ENCODE measurements at regions of chr9 and their contacts with region 1.

Region 1: GRCh38 chr9:125133403-125134329 is 9.7 kb downstream of the SCAI start:
- DNase-seq: no peak
- H3K4me3 Mint-ChIP-seq: peak overlapping the region; percentile 20
- H3K27ac Mint-ChIP-seq: peak overlapping the region; percentile 88
- H3K4me1 Mint-ChIP-seq: peaks cover 16% of the 10 kb centered on the region
- H3K27me3 Mint-ChIP-seq: no peaks in the 10 kb centered on the region

Region 2: GRCh38 chr9:125003332-125003731 is 130.3 kb before region 1 on chr9:
- intact Hi-C with region 1: no loop called
- DNase-seq: no peak
- H3K4me3 Mint-ChIP-seq: no peak overlapping the region
- H3K27ac Mint-ChIP-seq: no peak overlapping the region
- H3K4me1 Mint-ChIP-seq: no peaks in the 10 kb centered on the region
- H3K27me3 Mint-ChIP-seq: no peaks in the 10 kb centered on the region

Region 3: DNA sequence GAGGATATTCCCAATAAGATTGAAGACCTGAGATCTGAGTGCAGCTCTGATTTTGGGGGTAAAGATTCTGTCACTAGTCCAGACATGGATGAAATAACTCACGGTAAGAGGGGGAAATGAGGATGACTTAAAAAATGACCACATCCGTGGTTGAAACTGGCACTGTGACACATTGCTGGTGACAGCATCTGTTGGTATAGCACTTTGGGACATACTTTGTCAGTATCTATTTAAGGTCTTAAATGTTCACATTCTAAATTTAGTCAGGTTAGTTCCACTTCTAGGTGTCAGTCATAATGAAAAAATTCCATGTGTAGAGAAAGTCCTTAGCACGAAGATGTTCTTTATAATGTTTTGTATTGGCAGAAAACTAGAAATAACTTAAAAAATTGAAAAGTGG is 198.9 kb after region 1 on chr9:
- intact Hi-C with region 1: loop called (anchors 5 kb)
- DNase-seq: no peak
- H3K4me3 Mint-ChIP-seq: no peak overlapping the region
- H3K27ac Mint-ChIP-seq: peak overlapping the region; percentile 19
- H3K4me1 Mint-ChIP-seq: peaks cover 13% of the 10 kb centered on the region
- H3K27me3 Mint-ChIP-seq: no peaks in the 10 kb centered on the region

Measured in activated T-helper 2 cell treated with anti-CD3 and anti-CD28 coated beads, Interferon-gamma antibody, Interleukin-2, Interleukin-4, amounts not matched to agents 10 μg/mL and 5 μg/mL and 100 μg/mL, durations not matched to agents 14 hours and 24 hours and 36 hours (primary cell).